ENCODE measurements at regions of chr15 and their contacts with region 1.

Region 1: DNA sequence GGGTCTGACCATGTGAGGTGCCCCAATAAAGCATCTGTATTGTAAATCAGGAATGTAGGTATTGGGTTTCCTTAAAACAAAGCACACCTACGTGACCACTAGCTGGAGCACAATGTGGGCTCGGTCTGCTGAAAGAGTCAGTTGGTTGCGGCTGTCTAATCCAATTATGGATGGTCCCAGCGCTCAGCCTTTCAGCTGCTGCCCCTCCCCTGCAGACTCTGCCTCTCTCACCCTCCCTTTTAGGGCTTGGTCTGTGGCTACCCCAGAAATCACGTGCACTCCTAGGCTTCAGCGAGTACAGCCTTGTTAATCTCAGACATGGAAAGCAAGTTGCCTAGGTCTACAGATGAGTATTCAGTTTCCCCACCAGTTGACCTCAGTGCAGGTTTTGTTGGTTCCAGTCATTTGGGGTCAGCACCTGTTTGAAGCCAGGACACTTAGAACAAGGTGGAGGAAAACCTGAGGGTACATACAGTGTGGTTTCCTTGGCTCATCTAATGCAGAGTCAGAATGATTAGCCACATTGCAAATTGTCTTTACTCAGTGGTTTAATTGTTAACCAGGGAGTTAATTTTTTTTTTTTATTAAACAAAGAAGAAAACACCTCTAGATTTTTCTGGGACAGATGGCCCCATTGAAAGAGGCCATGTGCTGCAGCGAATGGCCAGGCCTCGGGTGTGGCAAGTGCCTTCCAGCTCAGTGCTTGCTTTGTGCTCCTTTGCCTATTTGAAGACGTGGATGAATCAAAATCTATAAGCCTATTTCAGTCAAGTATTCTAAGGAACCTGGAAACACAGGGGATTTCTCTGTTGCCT is 137.7 kb downstream of the IGF1R start:
- DNase-seq: peak in 4 of 5 donors; percentile 48 to 63 (median 56)
- ATAC-seq: peak; percentile 77 to 88 (median 86)
- H3K4me3 ChIP-seq: no peak overlapping the region
- H3K27ac ChIP-seq: peak overlapping the region in 9 of 12 donors; percentile 4 to 75 (median 55)
- H3K4me1 ChIP-seq: peaks cover 4 to 65% (median 37%) of the 10 kb centered on the region in 12 donors
- H3K27me3 ChIP-seq: no peaks in the 10 kb centered on the region
- CTCF ChIP-seq: no peak
- POLR2A ChIP-seq: no peak

Region 2: DNA sequence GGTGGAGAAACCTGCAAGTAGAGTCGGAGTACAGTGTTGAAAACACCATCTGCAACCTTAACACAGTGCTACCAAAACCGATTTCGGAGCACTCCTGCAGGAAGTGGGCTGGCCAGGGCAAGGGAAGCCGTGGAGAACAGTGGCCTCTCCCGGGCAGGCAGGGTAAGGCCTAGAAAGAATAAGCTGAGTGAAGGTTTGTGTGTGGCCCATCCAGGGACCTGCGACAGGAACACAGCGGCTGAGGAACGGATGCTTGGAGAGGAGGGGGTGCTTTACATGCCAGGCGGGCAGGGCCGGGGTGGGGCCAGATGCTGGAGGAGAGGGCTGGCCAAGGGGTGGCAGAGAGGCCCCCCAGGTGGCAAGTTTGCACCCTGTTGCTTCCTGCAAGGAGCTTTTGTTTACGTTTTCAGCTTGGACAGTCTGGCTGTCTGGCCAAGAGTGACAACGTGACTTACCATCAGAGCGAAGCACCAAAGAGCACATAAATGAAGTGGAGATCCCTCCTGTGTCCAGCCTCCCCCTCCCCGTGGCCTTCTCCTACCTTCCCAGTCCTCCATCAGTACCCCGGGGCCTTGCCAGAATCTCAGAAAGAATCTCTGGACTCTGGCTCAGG is 65.1 kb after region 1 on chr15:
- intact Hi-C with region 1: loop called in 2 of 10 experiments (anchors 2 to 5 kb)
- DNase-seq: peak; percentile 73 to 83 (median 83)
- ATAC-seq: peak; percentile 60 to 82 (median 71)
- H3K4me3 ChIP-seq: peak overlapping the region in 5 of 12 donors; percentile 62 to 84 (median 70)
- H3K27ac ChIP-seq: peak overlapping the region in 11 of 12 donors; percentile 62 to 93 (median 87)
- H3K4me1 ChIP-seq: peaks cover 17 to 67% (median 44%) of the 10 kb centered on the region in 12 donors
- H3K27me3 ChIP-seq: no peaks in the 10 kb centered on the region
- CTCF ChIP-seq: peak; percentile 63 to 89 (median 73)
- POLR2A ChIP-seq: no peak

Measured in heart left ventricle (tissue), 16 donors.